Ascending aorta (tissue), 2 donors: ENCODE measurements at regions of chr7 and their contacts with region 1.

Region 1: DNA sequence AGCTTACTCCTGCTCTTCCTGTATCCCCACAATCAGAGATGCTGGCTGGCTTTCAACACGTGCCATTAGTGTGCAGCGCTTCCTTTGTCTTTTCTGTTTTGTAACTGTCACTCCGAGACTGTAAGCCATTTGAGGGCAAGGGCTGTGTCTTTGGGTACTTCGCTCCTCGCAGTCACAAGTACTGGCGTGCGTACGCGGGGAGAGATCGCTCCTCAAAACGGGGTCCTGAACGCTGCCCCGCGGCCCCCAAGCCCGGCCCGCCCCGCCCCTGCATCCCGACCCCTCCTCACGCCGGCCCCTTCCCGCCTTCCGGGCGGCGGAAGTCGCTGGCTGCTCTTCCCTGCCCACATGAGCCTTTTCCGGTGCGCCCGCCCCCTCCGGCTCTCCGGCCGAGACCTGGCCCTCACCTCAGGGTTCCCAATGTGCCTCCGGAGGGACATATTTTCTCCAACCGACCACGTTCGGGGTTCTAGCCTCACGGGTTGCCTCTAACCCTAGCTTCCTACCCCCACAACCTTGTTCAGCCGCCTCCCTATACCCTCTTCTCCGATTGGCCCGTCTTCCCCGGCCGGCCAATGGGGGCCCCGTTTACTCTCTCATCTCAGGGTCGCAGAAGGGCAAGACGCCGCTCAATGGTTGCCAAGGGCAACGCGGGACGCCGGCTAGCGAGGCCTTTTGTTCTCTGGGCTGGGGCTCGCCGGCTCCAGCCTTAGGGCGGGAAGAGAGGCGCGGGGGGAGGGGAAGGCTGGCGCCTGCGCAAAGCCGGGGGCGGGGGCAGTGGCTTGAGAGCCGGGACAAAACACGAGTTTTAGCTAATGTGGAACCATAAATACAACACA is at the start of gene CEP41:
- DNase-seq: peak; percentile 91 to 98
- H3K4me3 ChIP-seq: peak within 1 kb of the TSS; percentile 76 to 79
- H3K27ac ChIP-seq: peak within 1 kb of the TSS; percentile 77 to 78
- H3K4me1 ChIP-seq: peaks cover 0 to 3% of the 10 kb centered on the region in 2 donors
- H3K27me3 ChIP-seq: no peaks in the 10 kb centered on the region
- CTCF ChIP-seq: no peak
- total RNA-seq, gene CEP41: 4.3 TPM

Region 2: GRCh38 chr7:129611246-129612111 is 829.3 kb before region 1 on chr7 and contains the start of gene NRF1:
- intact Hi-C with region 1: loop called (anchors 2 kb)
- DNase-seq: peak; percentile 45 to 93
- H3K4me3 ChIP-seq: peak within 1 kb of the TSS; percentile 69 to 91
- H3K27ac ChIP-seq: peak within 1 kb of the TSS; percentile 93 to 99
- H3K4me1 ChIP-seq: peaks cover 6 to 26% of the 10 kb centered on the region in 2 donors
- H3K27me3 ChIP-seq: no peaks in the 10 kb centered on the region
- CTCF ChIP-seq: peak in 2 of 3 experiments; percentile 10 to 39
- total RNA-seq, gene NRF1: 3.1 TPM

Region 3: GRCh38 chr7:130205084-130205947 is 235.4 kb before region 1 on chr7 and contains the start of gene TMEM209:
- intact Hi-C with region 1: loop called (anchors 2 kb)
- DNase-seq: peak; percentile 83 to 97
- H3K4me3 ChIP-seq: peak within 1 kb of the TSS; percentile 69 to 83
- H3K27ac ChIP-seq: peak within 1 kb of the TSS; percentile 77 to 95
- H3K4me1 ChIP-seq: peaks cover 0 to 5% of the 10 kb centered on the region in 2 donors
- H3K27me3 ChIP-seq: no peaks in the 10 kb centered on the region
- CTCF ChIP-seq: no peak
- total RNA-seq, gene TMEM209: 5.3 TPM

Region 4: GRCh38 chr7:130292682-130293257 is 148.0 kb before region 1 on chr7 and contains the start of gene CPA4:
- intact Hi-C with region 1: loop called (anchors 1 kb)
- DNase-seq: peak; percentile 16 to 88
- H3K4me3 ChIP-seq: no peak within 1 kb of the TSS
- H3K27ac ChIP-seq: peak within 1 kb of the TSS; percentile 78 to 79
- H3K4me1 ChIP-seq: peaks cover 0 to 14% of the 10 kb centered on the region in 2 donors
- H3K27me3 ChIP-seq: no peaks in the 10 kb centered on the region
- CTCF ChIP-seq: no peak
- total RNA-seq, gene CPA4: not detected

Region 5: GRCh38 chr7:130322587-130322986 is 118.2 kb before region 1 on chr7:
- intact Hi-C with region 1: no loop called
- DNase-seq: no peak
- H3K4me3 ChIP-seq: no peak overlapping the region
- H3K27ac ChIP-seq: no peak overlapping the region
- H3K4me1 ChIP-seq: no peaks in the 10 kb centered on the region
- H3K27me3 ChIP-seq: no peaks in the 10 kb centered on the region
- CTCF ChIP-seq: no peak

Region 6: GRCh38 chr7:130394421-130395195 is 46.1 kb before region 1 on chr7:
- intact Hi-C with region 1: loop called (anchors 5 kb)
- DNase-seq: no peak
- H3K4me3 ChIP-seq: no peak overlapping the region
- H3K27ac ChIP-seq: peak overlapping the region; percentile 32 to 61
- H3K4me1 ChIP-seq: peaks cover 0 to 9% of the 10 kb centered on the region in 2 donors
- H3K27me3 ChIP-seq: no peaks in the 10 kb centered on the region
- CTCF ChIP-seq: no peak

Region 7: GRCh38 chr7:130478991-130479390 is 38.2 kb after region 1 on chr7:
- intact Hi-C with region 1: no loop called
- DNase-seq: no peak
- H3K4me3 ChIP-seq: no peak overlapping the region
- H3K27ac ChIP-seq: no peak overlapping the region
- H3K4me1 ChIP-seq: no peaks in the 10 kb centered on the region
- H3K27me3 ChIP-seq: no peaks in the 10 kb centered on the region
- CTCF ChIP-seq: no peak

Region 8: DNA sequence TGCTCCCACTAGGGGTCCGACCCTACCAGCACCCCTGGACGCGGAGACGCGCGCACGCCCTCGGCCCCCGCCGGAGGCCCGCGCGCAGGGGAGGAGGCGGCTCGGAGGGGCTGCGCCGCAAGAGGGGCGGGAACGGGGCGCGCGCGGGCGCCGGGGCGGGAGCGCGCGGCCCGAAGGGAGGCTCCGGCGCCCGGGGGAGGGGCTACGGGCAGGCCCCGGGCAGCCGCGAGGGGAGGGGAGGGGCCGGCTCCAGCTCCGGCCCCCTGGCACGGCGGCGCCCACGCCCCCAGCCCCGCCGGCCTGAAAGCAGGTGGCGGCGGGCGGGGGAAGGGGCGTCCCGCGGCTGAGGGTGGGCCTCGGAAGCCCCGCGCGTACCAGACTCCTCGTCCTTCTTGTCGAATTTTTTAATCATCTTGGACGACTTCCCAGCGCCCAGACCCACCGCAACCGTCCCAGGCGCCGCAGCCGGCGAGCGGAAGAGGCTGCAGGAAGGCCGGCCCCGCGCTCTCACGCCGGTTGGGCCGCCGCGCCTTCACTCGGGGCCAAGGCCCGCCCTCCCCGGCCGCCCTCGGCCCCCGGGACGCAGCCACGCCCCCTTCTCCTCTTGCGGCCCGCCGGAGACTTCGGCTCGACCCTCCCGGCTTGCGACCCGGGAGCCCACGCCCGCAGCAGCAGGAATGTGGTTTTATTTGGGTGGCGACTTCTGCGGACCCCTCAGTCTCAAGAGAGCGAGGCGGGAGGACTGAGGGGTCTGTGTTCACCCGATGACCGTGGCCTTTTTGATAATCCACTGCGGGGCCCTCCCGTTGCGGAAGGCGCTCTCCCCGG is 227.7 kb after region 1 on chr7 and contains the start of gene COPG2:
- intact Hi-C with region 1: loop called (anchors 2 kb)
- DNase-seq: peak; percentile 22 to 88
- H3K4me3 ChIP-seq: peak within 1 kb of the TSS; percentile 83 to 89
- H3K27ac ChIP-seq: peak within 1 kb of the TSS; percentile 68 to 70
- H3K4me1 ChIP-seq: peaks cover 0 to 3% of the 10 kb centered on the region in 2 donors
- H3K27me3 ChIP-seq: no peaks in the 10 kb centered on the region
- CTCF ChIP-seq: no peak
- total RNA-seq, gene COPG2: 5.4 TPM